Naive thymus-derived CD4-positive, alpha-beta T cell (primary cell): ENCODE measurements at regions of chr11 and their contacts with region 1.

Region 1: DNA sequence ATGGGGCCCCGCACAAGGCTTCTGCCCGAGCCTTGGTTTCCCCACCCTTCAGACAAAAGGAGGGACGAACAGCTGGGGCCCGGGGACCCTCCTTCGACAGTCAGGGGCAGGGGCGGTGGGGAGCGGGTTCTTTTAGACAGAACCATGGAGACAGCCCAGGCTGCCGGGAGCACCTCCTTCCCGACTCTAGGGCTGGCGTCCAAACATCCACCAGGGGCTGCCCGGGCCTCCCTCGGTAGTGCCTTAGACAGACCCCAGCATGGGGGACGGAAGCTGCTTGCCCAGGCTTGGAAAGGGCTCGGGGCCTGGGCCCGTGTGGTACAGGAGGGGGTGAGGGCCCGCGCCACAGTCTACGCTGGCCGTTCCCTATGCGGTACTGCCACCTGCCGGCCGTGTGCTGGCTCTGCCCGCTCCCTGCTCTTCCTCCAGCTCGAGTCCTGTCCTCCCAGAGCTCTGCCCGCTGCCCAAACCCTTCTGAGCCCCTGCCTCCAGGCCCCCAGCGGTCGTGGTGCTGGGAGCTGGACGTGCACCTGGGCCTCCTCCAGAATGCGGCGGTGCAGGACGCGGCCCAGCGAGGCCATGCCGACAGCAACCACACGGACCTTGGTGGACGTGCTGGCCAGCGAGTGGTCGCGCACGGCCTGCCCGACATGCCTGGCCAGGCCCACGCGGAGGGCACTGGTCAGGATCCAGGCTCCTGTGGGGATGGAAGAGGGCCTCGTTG is 20.1 kb downstream of the TSSC4 start:
- DNase-seq: peak; percentile 44 to 74 (median 70)
- ATAC-seq: peak; percentile 93
- H3K4me3 ChIP-seq: no peak overlapping the region
- H3K4me3 Mint-ChIP-seq: no peak overlapping the region
- H3K27ac ChIP-seq: no peak overlapping the region
- H3K27ac Mint-ChIP-seq: no peak overlapping the region
- H3K4me1 ChIP-seq: peaks cover 0 to 10% of the 10 kb centered on the region in 2 donors
- H3K4me1 Mint-ChIP-seq: peaks cover 0 to 3% (median 2%) of the 10 kb centered on the region in 7 donors
- H3K27me3 ChIP-seq: no peaks in the 10 kb centered on the region
- H3K27me3 Mint-ChIP-seq: no peaks in the 10 kb centered on the region

Region 2: DNA sequence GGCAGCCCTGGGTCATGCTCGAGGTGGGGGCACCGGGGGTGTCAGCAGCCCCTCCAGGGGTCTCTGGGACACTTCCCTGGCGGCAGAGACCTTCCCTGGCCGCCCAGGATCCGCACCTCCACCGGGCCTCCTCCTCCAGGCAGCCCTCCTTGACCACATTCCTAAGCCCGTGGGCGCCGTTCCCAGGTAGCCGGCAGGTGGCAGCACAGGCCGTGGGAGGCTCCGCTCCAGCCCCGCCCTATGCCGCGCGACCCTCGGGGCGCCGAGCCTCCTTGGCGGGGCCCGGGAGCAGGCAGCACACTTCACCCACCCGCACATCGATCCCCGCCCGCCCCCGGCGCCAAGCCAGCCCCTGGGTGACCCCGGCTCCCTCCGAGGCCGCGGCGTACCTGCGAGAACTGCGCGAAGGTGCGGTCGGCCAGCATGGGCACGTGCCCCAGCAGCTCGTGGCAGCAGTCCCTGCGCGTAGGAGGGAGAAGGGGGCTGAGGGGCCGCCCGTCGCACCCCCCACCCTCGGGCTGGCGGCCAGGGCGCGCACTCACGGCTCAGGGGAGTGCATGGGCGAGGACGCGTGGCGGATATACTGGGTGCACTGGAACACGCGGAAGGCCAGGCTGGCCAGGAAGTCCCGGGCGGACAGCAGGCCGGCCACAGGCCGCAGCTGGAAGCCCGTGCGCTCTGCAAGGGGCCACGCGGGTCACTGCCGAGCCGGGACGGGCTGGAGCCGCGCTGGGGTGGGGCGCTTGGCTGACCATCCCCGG is 254.4 kb before region 1 on chr11:
- CTCF ChIA-PET with region 1: interaction called, 15 read pairs
- POLR2A ChIA-PET with region 1: no interaction called
- intact Hi-C with region 1: loop called in 1 of 2 experiments (anchors 1 kb)
- DNase-seq: peak in 7 of 9 donors; percentile 34 to 45 (median 38)
- ATAC-seq: peak; percentile 59
- H3K4me3 ChIP-seq: no peak overlapping the region
- H3K4me3 Mint-ChIP-seq: peak overlapping the region in 1 of 10 donors; percentile 19
- H3K27ac ChIP-seq: no peak overlapping the region
- H3K27ac Mint-ChIP-seq: no peak overlapping the region
- H3K4me1 ChIP-seq: no peaks in the 10 kb centered on the region
- H3K4me1 Mint-ChIP-seq: no peaks in the 10 kb centered on the region
- H3K27me3 ChIP-seq: no peaks in the 10 kb centered on the region
- H3K27me3 Mint-ChIP-seq: peaks cover 0 to 8% (median 0%) of the 10 kb centered on the region in 5 donors

Region 3: DNA sequence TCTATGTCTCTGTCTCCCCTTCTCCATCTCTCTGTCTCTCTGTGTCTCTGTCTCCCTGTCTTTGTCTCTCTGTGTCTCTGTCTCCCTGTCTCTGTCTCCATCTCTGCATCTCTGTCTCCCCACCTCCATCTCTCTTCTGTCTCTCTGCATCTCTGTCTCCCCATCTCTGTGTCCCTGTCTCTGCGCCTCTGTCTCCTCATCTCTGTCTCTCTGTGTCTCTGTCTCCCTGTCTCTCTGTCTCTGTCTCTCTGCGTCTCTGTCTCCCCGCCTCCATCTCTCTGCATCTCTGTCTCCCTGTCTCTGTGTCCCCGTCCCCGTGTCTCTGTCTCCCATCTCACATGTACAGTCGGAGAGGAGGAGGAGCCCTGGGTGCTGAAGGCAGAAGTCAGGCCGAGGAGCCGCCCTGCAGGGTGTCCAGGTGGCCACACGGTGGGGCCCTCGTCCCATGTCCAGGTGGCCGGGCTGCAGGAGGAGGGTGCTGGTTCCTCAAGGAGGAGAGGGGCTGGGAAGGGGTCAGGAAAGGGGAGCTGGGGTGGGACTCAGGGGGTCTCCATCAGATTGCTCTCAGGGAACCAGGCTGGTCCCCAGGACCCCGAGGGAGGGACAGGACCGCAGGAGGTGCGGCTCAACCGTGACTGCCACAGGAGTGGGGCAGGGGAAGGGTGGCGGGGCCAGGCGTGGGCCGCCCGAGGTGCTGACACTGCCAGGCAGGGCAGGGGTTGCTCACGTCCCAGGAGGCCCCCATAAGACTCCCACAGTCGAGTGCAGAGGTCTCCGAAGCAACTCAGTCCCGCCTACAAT is 223.5 kb before region 1 on chr11:
- CTCF ChIA-PET with region 1: interaction called, 16 read pairs
- POLR2A ChIA-PET with region 1: no interaction called
- intact Hi-C with region 1: loop called in 1 of 2 experiments (anchors 1 kb)
- DNase-seq: peak; percentile 29 to 72 (median 62)
- ATAC-seq: peak; percentile 89
- H3K4me3 ChIP-seq: no peak overlapping the region
- H3K4me3 Mint-ChIP-seq: no peak overlapping the region
- H3K27ac ChIP-seq: no peak overlapping the region
- H3K27ac Mint-ChIP-seq: peak overlapping the region in 2 of 9 donors; percentile 46 to 69
- H3K4me1 ChIP-seq: peaks cover 0 to 4% of the 10 kb centered on the region in 2 donors
- H3K4me1 Mint-ChIP-seq: peaks cover 4 to 16% (median 12%) of the 10 kb centered on the region in 7 donors
- H3K27me3 ChIP-seq: no peaks in the 10 kb centered on the region
- H3K27me3 Mint-ChIP-seq: peaks cover 4 to 13% (median 12%) of the 10 kb centered on the region in 5 donors

Region 4: GRCh38 chr11:2298795-2299761 is 121.6 kb before region 1 on chr11:
- CTCF ChIA-PET with region 1: interaction called, 167 read pairs
- POLR2A ChIA-PET with region 1: interaction called, 20 read pairs
- intact Hi-C with region 1: no loop called
- DNase-seq: peak in 2 of 9 donors; percentile 30 to 32
- ATAC-seq: no peak
- H3K4me3 ChIP-seq: no peak overlapping the region
- H3K4me3 Mint-ChIP-seq: peak overlapping the region; percentile 52 to 98 (median 75)
- H3K27ac ChIP-seq: peak overlapping the region; percentile 58
- H3K27ac Mint-ChIP-seq: peak overlapping the region; percentile 63 to 91 (median 79)
- H3K4me1 ChIP-seq: peaks cover 30 to 44% of the 10 kb centered on the region in 2 donors
- H3K4me1 Mint-ChIP-seq: peaks cover 19 to 51% (median 38%) of the 10 kb centered on the region in 7 donors
- H3K27me3 ChIP-seq: no peaks in the 10 kb centered on the region
- H3K27me3 Mint-ChIP-seq: peaks cover 0 to 5% (median 0%) of the 10 kb centered on the region in 5 donors

Region 5: GRCh38 chr11:2363577-2364370 is 56.9 kb before region 1 on chr11:
- CTCF ChIA-PET with region 1: interaction called, 10 read pairs
- POLR2A ChIA-PET with region 1: no interaction called
- intact Hi-C with region 1: no loop called
- DNase-seq: no peak
- ATAC-seq: no peak
- H3K4me3 ChIP-seq: no peak overlapping the region
- H3K4me3 Mint-ChIP-seq: no peak overlapping the region
- H3K27ac ChIP-seq: no peak overlapping the region
- H3K27ac Mint-ChIP-seq: no peak overlapping the region
- H3K4me1 ChIP-seq: no peaks in the 10 kb centered on the region
- H3K4me1 Mint-ChIP-seq: peaks cover 0 to 2% (median 0%) of the 10 kb centered on the region in 7 donors
- H3K27me3 ChIP-seq: no peaks in the 10 kb centered on the region
- H3K27me3 Mint-ChIP-seq: no peaks in the 10 kb centered on the region

Region 6: GRCh38 chr11:2382936-2383851 is 37.5 kb before region 1 on chr11:
- CTCF ChIA-PET with region 1: no interaction called
- POLR2A ChIA-PET with region 1: no interaction called
- intact Hi-C with region 1: no loop called
- DNase-seq: no peak
- ATAC-seq: peak; percentile 1
- H3K4me3 ChIP-seq: no peak overlapping the region
- H3K4me3 Mint-ChIP-seq: no peak overlapping the region
- H3K27ac ChIP-seq: no peak overlapping the region
- H3K27ac Mint-ChIP-seq: peak overlapping the region in 3 of 9 donors; percentile 48 to 76 (median 69)
- H3K4me1 ChIP-seq: peaks cover 43 to 47% of the 10 kb centered on the region in 2 donors
- H3K4me1 Mint-ChIP-seq: peaks cover 37 to 81% (median 43%) of the 10 kb centered on the region in 7 donors
- H3K27me3 ChIP-seq: no peaks in the 10 kb centered on the region
- H3K27me3 Mint-ChIP-seq: no peaks in the 10 kb centered on the region

Region 7: GRCh38 chr11:2780259-2781058 is 359.8 kb after region 1 on chr11:
- CTCF ChIA-PET with region 1: no interaction called
- POLR2A ChIA-PET with region 1: no interaction called
- intact Hi-C with region 1: no loop called
- DNase-seq: peak in 2 of 9 donors; percentile 6 to 16
- ATAC-seq: no peak
- H3K4me3 ChIP-seq: no peak overlapping the region
- H3K4me3 Mint-ChIP-seq: no peak overlapping the region
- H3K27ac ChIP-seq: no peak overlapping the region
- H3K27ac Mint-ChIP-seq: peak overlapping the region in 1 of 9 donors; percentile 13
- H3K4me1 ChIP-seq: no peaks in the 10 kb centered on the region
- H3K4me1 Mint-ChIP-seq: peaks cover 0 to 8% (median 1%) of the 10 kb centered on the region in 7 donors
- H3K27me3 ChIP-seq: no peaks in the 10 kb centered on the region
- H3K27me3 Mint-ChIP-seq: peaks cover 0 to 18% (median 0%) of the 10 kb centered on the region in 5 donors